T-cell (primary cell): ENCODE measurements at regions of chr5 and their contacts with region 1.

Region 1: GRCh38 chr5:117604845-117605244 is 1030.2 kb upstream of the SEMA6A start:
- DNase-seq: no peak
- ATAC-seq: no peak
- H3K4me3 ChIP-seq: no peak overlapping the region
- H3K4me3 Mint-ChIP-seq: no peak overlapping the region
- H3K27ac ChIP-seq: no peak overlapping the region
- H3K27ac Mint-ChIP-seq: no peak overlapping the region
- H3K4me1 ChIP-seq: no peaks in the 10 kb centered on the region
- H3K4me1 Mint-ChIP-seq: no peaks in the 10 kb centered on the region
- H3K27me3 ChIP-seq: no peaks in the 10 kb centered on the region
- H3K27me3 Mint-ChIP-seq: no peaks in the 10 kb centered on the region

Region 2: DNA sequence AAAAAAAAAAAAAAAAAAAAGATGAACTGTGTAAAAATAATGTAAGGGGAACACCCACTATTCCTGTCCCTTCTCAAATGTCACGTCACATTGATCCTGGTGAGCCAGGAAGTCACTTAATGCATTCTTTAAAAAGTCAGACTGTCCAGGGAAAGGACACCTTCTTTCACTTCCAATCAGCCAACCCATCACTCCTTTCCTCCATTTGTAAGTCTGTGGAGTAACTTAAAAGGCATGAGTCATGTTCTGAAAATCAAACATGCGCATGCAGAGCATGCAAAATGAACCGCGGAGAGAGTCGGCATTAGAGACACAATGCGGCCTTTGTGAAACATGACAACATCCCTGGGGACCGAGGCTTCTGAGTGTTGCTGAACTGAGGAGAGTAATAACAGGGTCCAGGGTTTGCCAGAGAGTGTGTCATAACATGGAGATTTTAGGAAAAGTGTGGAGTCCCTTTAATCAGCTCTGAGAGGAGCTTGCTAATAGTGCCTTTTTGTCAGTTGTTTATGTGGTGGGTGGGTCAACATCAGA is 952.6 kb before region 1 on chr5:
- CTCF ChIA-PET with region 1: no interaction called
- POLR2A ChIA-PET with region 1: no interaction called
- DNase-seq: no peak
- ATAC-seq: no peak
- H3K4me3 ChIP-seq: no peak overlapping the region
- H3K4me3 Mint-ChIP-seq: no peak overlapping the region
- H3K27ac ChIP-seq: no peak overlapping the region
- H3K27ac Mint-ChIP-seq: no peak overlapping the region
- H3K4me1 ChIP-seq: no peaks in the 10 kb centered on the region
- H3K4me1 Mint-ChIP-seq: no peaks in the 10 kb centered on the region
- H3K27me3 ChIP-seq: no peaks in the 10 kb centered on the region
- H3K27me3 Mint-ChIP-seq: peaks cover 5 to 9% of the 10 kb centered on the region in 2 donors

Region 3: DNA sequence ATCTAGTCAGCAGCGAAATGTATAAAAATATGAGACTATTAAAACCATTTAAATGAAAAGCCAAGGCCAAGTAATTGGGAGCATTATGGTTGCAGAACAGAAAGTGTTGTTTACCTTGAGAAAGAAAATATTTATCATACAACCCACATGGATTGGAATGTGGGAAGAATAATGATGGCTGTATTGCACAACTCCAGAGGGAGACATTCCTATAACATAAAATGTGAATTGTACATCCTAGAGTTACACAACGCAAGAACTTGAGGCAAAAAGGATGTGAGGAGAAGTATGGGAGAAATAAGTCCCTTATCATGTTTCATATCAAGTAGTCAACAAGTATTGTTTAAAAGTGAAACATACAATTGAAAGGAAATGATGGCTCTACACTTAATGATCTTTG is 16.2 kb before region 1 on chr5:
- CTCF ChIA-PET with region 1: no interaction called
- POLR2A ChIA-PET with region 1: no interaction called
- DNase-seq: no peak
- ATAC-seq: no peak
- H3K4me3 ChIP-seq: no peak overlapping the region
- H3K4me3 Mint-ChIP-seq: no peak overlapping the region
- H3K27ac ChIP-seq: no peak overlapping the region
- H3K27ac Mint-ChIP-seq: no peak overlapping the region
- H3K4me1 ChIP-seq: no peaks in the 10 kb centered on the region
- H3K4me1 Mint-ChIP-seq: no peaks in the 10 kb centered on the region
- H3K27me3 ChIP-seq: no peaks in the 10 kb centered on the region
- H3K27me3 Mint-ChIP-seq: no peaks in the 10 kb centered on the region

Region 4: DNA sequence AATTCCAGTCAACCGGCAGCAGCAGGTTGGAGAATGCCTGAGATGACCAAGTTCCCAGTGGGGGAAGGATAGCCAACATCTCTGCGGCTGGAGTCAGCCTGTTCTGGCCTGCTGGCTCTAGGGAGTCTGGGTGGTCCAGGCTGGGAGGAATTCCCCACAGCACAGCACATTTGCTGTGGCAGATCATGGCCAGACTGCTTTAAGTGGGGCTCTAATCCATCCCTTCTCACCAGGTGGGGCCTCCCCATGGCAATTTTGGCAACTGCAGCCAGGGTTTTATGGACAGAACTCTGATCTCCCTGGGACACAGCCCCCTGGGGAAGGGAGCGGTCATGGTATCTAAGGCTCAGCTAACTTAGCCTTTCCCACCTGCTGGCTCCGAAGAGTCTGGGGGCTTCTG is 1157.4 kb after region 1 on chr5:
- CTCF ChIA-PET with region 1: interaction called in 1 of 2 experiments, 15 read pairs
- POLR2A ChIA-PET with region 1: no interaction called
- DNase-seq: no peak
- ATAC-seq: no peak
- H3K4me3 ChIP-seq: no peak overlapping the region
- H3K4me3 Mint-ChIP-seq: no peak overlapping the region
- H3K27ac ChIP-seq: no peak overlapping the region
- H3K27ac Mint-ChIP-seq: no peak overlapping the region
- H3K4me1 ChIP-seq: no peaks in the 10 kb centered on the region
- H3K4me1 Mint-ChIP-seq: no peaks in the 10 kb centered on the region
- H3K27me3 ChIP-seq: peaks cover 0 to 10% of the 10 kb centered on the region in 2 experiments
- H3K27me3 Mint-ChIP-seq: peaks cover 0 to 4% of the 10 kb centered on the region in 2 donors